ENCODE measurements at regions of chr14 and their contacts with region 1.

Region 1: GRCh38 chr14:67285876-67286452 is 44.7 kb downstream of the PALS1 start:
- DNase-seq: peak in 2 of 9 experiments; percentile 40 to 54
- ATAC-seq: no peak
- H3K4me3 ChIP-seq: no peak overlapping the region
- H3K4me3 Mint-ChIP-seq: no peak overlapping the region
- H3K27ac ChIP-seq: no peak overlapping the region
- H3K27ac Mint-ChIP-seq: no peak overlapping the region
- H3K4me1 ChIP-seq: no peaks in the 10 kb centered on the region
- H3K4me1 Mint-ChIP-seq: peaks cover 2% of the 10 kb centered on the region
- H3K27me3 ChIP-seq: no peaks in the 10 kb centered on the region
- H3K27me3 Mint-ChIP-seq: no peaks in the 10 kb centered on the region
- CTCF ChIP-seq: peak; percentile 78

Region 2: DNA sequence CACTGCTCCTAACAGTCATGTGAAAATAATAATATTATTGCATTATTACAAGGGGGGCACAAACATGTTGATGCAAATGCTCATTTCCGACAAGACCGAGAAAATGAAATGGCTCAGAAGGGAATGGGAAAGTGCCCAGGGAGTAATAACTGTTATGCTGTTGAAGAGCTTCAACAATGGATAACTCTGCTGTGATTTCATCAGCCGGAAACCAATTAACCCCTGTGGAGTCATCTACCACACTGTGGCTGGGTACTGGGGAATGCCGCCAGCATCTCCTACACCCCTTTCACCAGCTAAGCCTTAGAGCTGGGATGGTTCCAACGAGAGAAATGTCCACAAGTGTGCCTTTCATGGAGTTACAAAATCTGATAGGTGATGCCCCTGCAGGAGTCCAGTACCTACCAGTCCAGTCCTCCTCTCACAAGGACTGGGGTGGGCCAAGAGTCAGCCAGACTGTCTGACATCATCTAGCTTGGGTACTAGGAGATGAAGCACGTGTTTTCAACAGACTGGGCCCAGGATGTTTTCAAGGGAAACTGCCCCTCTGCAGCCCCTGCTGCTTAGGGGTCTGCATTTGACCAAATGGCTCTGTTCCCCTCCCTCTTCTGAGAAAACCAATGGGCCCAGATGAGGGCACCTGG is 1309.1 kb before region 1 on chr14:
- CTCF ChIA-PET with region 1: no interaction called
- POLR2A ChIA-PET with region 1: no interaction called
- intact Hi-C with region 1: no loop called
- DNase-seq: no peak
- ATAC-seq: no peak
- H3K4me3 ChIP-seq: no peak overlapping the region
- H3K4me3 Mint-ChIP-seq: no peak overlapping the region
- H3K27ac ChIP-seq: no peak overlapping the region
- H3K27ac Mint-ChIP-seq: no peak overlapping the region
- H3K4me1 ChIP-seq: no peaks in the 10 kb centered on the region
- H3K4me1 Mint-ChIP-seq: no peaks in the 10 kb centered on the region
- H3K27me3 ChIP-seq: no peaks in the 10 kb centered on the region
- H3K27me3 Mint-ChIP-seq: peaks cover 8% of the 10 kb centered on the region
- CTCF ChIP-seq: no peak

Region 3: DNA sequence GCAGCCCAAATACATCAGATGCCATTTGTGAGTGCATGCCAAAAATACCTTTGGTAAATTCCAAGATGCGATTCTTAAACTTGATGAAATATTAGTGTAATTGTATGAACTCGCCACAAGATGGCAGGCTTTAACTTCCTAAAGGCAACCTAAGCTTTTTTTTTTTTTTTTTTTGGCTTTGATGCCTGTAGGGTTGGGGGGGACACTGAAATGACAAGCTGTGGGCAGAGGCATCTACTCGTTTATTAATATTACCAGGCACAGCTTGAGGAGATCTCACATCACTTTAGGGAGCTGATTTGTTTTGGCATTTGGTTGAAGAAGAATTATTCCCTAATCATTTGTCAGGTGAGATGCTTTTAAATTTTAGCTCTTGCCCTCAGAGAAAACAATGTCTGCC is 926.5 kb before region 1 on chr14:
- CTCF ChIA-PET with region 1: interaction called, 6 read pairs
- POLR2A ChIA-PET with region 1: no interaction called
- intact Hi-C with region 1: loop called in 1 of 2 experiments (anchors 2 kb)
- DNase-seq: peak in 4 of 9 experiments; percentile 2 to 78 (median 50)
- ATAC-seq: peak; percentile 51
- H3K4me3 ChIP-seq: no peak overlapping the region
- H3K4me3 Mint-ChIP-seq: no peak overlapping the region
- H3K27ac ChIP-seq: no peak overlapping the region
- H3K27ac Mint-ChIP-seq: no peak overlapping the region
- H3K4me1 ChIP-seq: no peaks in the 10 kb centered on the region
- H3K4me1 Mint-ChIP-seq: no peaks in the 10 kb centered on the region
- H3K27me3 ChIP-seq: no peaks in the 10 kb centered on the region
- H3K27me3 Mint-ChIP-seq: no peaks in the 10 kb centered on the region
- CTCF ChIP-seq: peak; percentile 75

Region 4: GRCh38 chr14:66495218-66496098 is 790.5 kb before region 1 on chr14:
- CTCF ChIA-PET with region 1: no interaction called
- POLR2A ChIA-PET with region 1: no interaction called
- intact Hi-C with region 1: loop called (anchors 2 to 5 kb)
- DNase-seq: peak in 6 of 9 experiments; percentile 11 to 70 (median 34)
- ATAC-seq: peak; percentile 31
- H3K4me3 ChIP-seq: no peak overlapping the region
- H3K4me3 Mint-ChIP-seq: no peak overlapping the region
- H3K27ac ChIP-seq: no peak overlapping the region
- H3K27ac Mint-ChIP-seq: no peak overlapping the region
- H3K4me1 ChIP-seq: peaks cover 17% of the 10 kb centered on the region
- H3K4me1 Mint-ChIP-seq: peaks cover 20% of the 10 kb centered on the region
- H3K27me3 ChIP-seq: no peaks in the 10 kb centered on the region
- H3K27me3 Mint-ChIP-seq: no peaks in the 10 kb centered on the region
- CTCF ChIP-seq: peak; percentile 75

Region 5: GRCh38 chr14:66624299-66624937 is 661.5 kb before region 1 on chr14:
- CTCF ChIA-PET with region 1: interaction called, 3 read pairs
- POLR2A ChIA-PET with region 1: no interaction called
- intact Hi-C with region 1: loop called in 1 of 2 experiments (anchors 2 kb)
- DNase-seq: peak in 2 of 9 experiments; percentile 16 to 31
- ATAC-seq: no peak
- H3K4me3 ChIP-seq: no peak overlapping the region
- H3K4me3 Mint-ChIP-seq: no peak overlapping the region
- H3K27ac ChIP-seq: no peak overlapping the region
- H3K27ac Mint-ChIP-seq: no peak overlapping the region
- H3K4me1 ChIP-seq: no peaks in the 10 kb centered on the region
- H3K4me1 Mint-ChIP-seq: no peaks in the 10 kb centered on the region
- H3K27me3 ChIP-seq: no peaks in the 10 kb centered on the region
- H3K27me3 Mint-ChIP-seq: no peaks in the 10 kb centered on the region
- CTCF ChIP-seq: no peak

Region 6: GRCh38 chr14:67166450-67166853 is 119.5 kb before region 1 on chr14:
- CTCF ChIA-PET with region 1: interaction called, 31 read pairs
- POLR2A ChIA-PET with region 1: no interaction called
- intact Hi-C with region 1: loop called in 1 of 2 experiments (anchors 1 kb)
- DNase-seq: peak in 5 of 9 experiments; percentile 24 to 57 (median 28)
- ATAC-seq: no peak
- H3K4me3 ChIP-seq: no peak overlapping the region
- H3K4me3 Mint-ChIP-seq: no peak overlapping the region
- H3K27ac ChIP-seq: no peak overlapping the region
- H3K27ac Mint-ChIP-seq: no peak overlapping the region
- H3K4me1 ChIP-seq: no peaks in the 10 kb centered on the region
- H3K4me1 Mint-ChIP-seq: no peaks in the 10 kb centered on the region
- H3K27me3 ChIP-seq: no peaks in the 10 kb centered on the region
- H3K27me3 Mint-ChIP-seq: no peaks in the 10 kb centered on the region
- CTCF ChIP-seq: peak; percentile 84

Region 7: DNA sequence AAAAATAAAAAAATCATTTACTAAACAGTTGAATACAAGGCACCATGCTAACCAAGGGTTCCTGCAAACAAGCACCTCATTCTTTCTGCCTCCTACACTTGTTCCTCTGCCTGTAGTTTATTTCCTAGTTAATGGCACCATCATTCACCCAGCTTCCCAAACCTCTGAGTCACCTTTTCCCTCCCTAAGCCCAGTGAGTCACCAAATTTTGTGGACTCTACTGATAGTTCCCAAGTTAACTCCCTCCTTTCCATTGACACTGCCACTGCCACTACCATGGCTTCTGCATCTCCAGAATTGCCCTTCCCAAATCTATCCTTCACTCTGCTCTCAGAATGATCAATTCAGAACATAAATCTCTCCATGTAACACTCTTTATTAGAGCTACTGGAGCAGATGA is 98.8 kb before region 1 on chr14:
- CTCF ChIA-PET with region 1: no interaction called
- POLR2A ChIA-PET with region 1: no interaction called
- intact Hi-C with region 1: no loop called
- DNase-seq: no peak
- ATAC-seq: no peak
- H3K4me3 ChIP-seq: no peak overlapping the region
- H3K4me3 Mint-ChIP-seq: no peak overlapping the region
- H3K27ac ChIP-seq: no peak overlapping the region
- H3K27ac Mint-ChIP-seq: no peak overlapping the region
- H3K4me1 ChIP-seq: no peaks in the 10 kb centered on the region
- H3K4me1 Mint-ChIP-seq: peaks cover 6% of the 10 kb centered on the region
- H3K27me3 ChIP-seq: no peaks in the 10 kb centered on the region
- H3K27me3 Mint-ChIP-seq: peaks cover 2% of the 10 kb centered on the region
- CTCF ChIP-seq: no peak

Region 8: GRCh38 chr14:67335781-67336180 is 49.8 kb after region 1 on chr14:
- CTCF ChIA-PET with region 1: no interaction called
- POLR2A ChIA-PET with region 1: no interaction called
- intact Hi-C with region 1: no loop called
- DNase-seq: peak in 2 of 9 experiments; percentile 23 to 40
- ATAC-seq: no peak
- H3K4me3 ChIP-seq: no peak overlapping the region
- H3K4me3 Mint-ChIP-seq: no peak overlapping the region
- H3K27ac ChIP-seq: no peak overlapping the region
- H3K27ac Mint-ChIP-seq: no peak overlapping the region
- H3K4me1 ChIP-seq: no peaks in the 10 kb centered on the region
- H3K4me1 Mint-ChIP-seq: no peaks in the 10 kb centered on the region
- H3K27me3 ChIP-seq: no peaks in the 10 kb centered on the region
- H3K27me3 Mint-ChIP-seq: no peaks in the 10 kb centered on the region
- CTCF ChIP-seq: peak; percentile 35

Region 9: DNA sequence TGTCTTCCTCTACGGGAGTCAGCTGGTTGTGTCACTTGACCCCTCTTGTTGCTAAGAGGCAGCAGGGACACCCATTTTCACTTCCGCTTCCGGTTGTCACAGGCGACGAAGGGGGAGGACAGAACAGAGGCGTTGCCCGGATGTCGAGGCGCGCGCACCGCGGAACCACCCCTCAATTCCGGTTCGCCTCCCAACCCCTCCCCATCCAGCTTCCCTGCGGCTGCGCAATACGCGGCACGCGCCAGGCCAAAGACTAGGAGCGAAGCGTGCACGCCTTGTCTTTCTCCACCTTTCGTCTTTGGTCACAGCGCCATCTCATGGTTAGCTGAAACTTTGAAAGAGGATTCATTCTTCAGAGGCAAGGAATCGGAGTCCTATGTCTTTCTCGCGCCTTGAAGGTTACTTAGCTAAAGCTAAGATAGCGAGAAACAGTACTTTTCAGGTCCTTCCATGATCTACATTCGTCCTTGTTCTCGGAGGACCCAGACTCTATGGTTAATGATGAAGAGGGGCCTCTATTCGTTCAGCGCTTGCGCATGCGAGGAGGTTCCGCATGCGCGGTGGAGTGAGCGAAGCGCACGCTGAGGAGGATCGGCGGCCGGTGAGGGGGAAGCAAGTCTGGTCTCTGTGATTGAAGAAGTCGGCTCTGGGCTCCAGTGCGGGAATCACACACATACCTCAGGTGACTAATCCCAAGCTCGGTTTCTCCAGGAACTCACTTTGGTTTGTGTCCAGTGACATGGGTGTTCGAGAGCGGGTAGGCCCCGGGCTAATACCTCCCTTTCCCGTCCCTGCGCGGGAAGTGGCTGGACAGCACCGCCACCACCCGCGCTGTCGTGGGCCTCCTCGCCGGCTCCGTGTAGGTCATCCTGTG is 74.0 kb after region 1 on chr14 and contains the starts of genes ATP6V1D and EIF2S1:
- CTCF ChIA-PET with region 1: no interaction called
- POLR2A ChIA-PET with region 1: no interaction called
- intact Hi-C with region 1: no loop called
- DNase-seq: peak; percentile 99 to 100 (median 99)
- ATAC-seq: peak; percentile 93
- H3K4me3 ChIP-seq: peak within 1 kb of the TSS; percentile 79 to 87
- H3K4me3 Mint-ChIP-seq: peak within 1 kb of the TSS; percentile 99
- H3K27ac ChIP-seq: peak within 1 kb of the TSS; percentile 83 to 93
- H3K27ac Mint-ChIP-seq: peak within 1 kb of the TSS; percentile 97
- H3K4me1 ChIP-seq: peaks cover 29% of the 10 kb centered on the region
- H3K4me1 Mint-ChIP-seq: peaks cover 80% of the 10 kb centered on the region
- H3K27me3 ChIP-seq: no peaks in the 10 kb centered on the region
- H3K27me3 Mint-ChIP-seq: no peaks in the 10 kb centered on the region
- CTCF ChIP-seq: peak; percentile 99
- total RNA-seq, gene ATP6V1D: 30.1 to 34.2 TPM
- total RNA-seq, gene EIF2S1: 29.4 to 34.4 TPM